Activated naive CD4-positive, alpha-beta T cell treated with anti-CD3 and anti-CD28 coated beads for 36 hours (primary cell): ENCODE measurements at regions of chr1 and their contacts with region 1.

Region 1: DNA sequence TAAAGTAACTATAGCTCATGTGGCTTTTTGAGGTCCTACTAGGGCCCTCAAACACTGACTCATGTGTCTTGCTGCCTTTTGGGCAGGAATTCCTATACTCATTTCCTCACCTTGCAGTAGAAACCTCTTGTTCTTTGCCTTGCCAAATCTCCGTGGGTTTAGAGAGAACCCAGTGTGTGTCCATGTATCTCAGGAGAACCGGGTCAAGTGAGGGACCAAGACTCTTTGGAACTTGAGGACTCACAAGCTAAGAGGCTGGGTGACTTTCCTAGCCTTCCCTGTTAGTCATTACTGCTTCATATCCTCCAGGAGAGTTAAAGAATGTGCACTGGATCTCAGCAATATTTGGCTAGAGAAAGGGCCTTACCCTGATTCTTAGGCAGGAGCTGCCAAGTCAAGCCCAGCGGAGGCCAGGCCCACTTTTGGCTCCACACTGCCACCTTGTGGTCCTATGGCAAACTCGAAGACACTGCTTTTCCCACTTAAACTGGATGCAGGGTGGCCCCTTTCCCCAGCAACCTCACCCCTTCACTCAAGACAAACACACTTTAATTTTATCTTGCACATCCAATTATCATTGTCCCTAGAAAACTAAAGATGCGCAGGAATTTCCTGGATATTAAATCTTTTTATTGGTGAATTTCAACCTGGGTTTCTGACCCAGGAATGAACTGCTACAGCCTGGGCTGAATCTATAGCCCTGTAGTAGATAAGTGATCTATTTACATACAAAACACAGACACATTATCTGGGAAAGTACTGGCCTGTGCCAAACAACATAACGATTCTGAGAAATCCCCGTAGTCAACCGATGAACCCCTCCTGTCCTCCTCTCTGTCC is 10.6 kb downstream of the AVPR1B start:
- DNase-seq: peak; percentile 92
- H3K4me3 Mint-ChIP-seq: no peak overlapping the region
- H3K27ac Mint-ChIP-seq: no peak overlapping the region
- H3K4me1 Mint-ChIP-seq: no peaks in the 10 kb centered on the region
- H3K27me3 Mint-ChIP-seq: peaks cover 2% of the 10 kb centered on the region

Region 2: DNA sequence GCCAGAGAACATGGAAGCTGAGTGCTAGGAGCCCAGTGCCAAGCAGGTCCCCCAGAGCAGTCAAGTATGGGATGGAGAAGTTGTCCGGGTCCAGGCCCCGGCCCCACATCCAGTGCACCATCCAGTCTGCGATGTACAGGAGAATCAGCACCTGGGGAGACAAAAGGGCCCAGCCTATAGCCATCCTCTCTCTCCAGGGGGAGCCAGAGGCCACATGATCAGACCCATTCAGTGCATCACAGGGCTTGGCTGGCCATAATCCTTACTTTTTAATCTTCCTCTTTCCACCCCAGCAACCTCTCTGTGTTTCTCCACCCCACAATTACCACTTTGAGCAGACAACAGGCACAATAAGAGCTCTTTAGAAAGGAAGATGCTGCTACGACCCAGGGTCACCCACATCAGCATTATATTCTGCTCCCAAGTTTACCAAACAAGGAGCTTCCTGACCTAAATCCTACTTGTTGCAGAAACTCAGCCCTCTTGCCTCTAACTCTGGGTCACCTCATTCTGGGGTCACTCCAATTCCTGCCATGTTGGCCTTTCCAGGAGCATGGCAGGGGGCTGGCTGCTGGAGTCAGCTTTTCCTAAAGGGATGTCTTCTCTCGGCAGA is 314.9 kb before region 1 on chr1:
- CTCF ChIA-PET with region 1: no interaction called
- intact Hi-C with region 1: loop called (anchors 1 kb)
- DNase-seq: peak; percentile 80
- H3K4me3 Mint-ChIP-seq: no peak overlapping the region
- H3K27ac Mint-ChIP-seq: no peak overlapping the region
- H3K4me1 Mint-ChIP-seq: no peaks in the 10 kb centered on the region
- H3K27me3 Mint-ChIP-seq: no peaks in the 10 kb centered on the region

Region 3: GRCh38 chr1:205983925-205984725 is 122.4 kb before region 1 on chr1:
- CTCF ChIA-PET with region 1: interaction called, 51 read pairs
- intact Hi-C with region 1: loop called (anchors 1 kb)
- DNase-seq: peak; percentile 63
- H3K4me3 Mint-ChIP-seq: no peak overlapping the region
- H3K27ac Mint-ChIP-seq: no peak overlapping the region
- H3K4me1 Mint-ChIP-seq: no peaks in the 10 kb centered on the region
- H3K27me3 Mint-ChIP-seq: no peaks in the 10 kb centered on the region

Region 4: DNA sequence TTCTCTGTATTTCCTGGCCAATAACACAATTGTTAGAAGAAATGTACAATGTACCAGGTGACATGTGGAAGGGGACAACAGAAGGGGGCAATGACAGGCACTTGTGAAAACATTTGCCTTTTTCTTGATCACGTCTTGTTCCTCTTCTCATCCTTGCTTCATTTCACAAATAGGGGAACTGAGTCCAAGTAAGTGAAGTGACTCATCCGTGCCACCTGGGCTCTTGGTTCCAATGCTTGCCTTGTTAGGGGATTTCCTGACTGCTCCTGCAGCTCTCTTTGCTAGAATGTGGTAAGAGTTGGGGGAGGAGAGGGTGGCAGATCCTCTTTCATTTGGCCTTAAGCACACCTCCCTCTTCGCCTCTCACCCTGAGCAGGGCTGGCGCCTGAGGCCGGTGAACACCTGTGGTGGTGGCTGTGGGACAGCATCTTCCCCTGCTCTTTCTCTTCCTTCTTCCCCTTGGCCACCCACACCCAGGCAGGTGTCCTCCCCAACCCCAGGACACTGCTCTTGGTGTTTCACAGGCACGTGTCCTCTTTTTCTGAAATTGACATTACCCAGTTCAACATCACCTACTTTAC is 55.8 kb before region 1 on chr1:
- CTCF ChIA-PET with region 1: interaction called, 17 read pairs
- intact Hi-C with region 1: no loop called
- DNase-seq: peak; percentile 87
- H3K4me3 Mint-ChIP-seq: no peak overlapping the region
- H3K27ac Mint-ChIP-seq: peak overlapping the region; percentile 60
- H3K4me1 Mint-ChIP-seq: peaks cover 47% of the 10 kb centered on the region
- H3K27me3 Mint-ChIP-seq: peaks cover 11% of the 10 kb centered on the region

Region 5: DNA sequence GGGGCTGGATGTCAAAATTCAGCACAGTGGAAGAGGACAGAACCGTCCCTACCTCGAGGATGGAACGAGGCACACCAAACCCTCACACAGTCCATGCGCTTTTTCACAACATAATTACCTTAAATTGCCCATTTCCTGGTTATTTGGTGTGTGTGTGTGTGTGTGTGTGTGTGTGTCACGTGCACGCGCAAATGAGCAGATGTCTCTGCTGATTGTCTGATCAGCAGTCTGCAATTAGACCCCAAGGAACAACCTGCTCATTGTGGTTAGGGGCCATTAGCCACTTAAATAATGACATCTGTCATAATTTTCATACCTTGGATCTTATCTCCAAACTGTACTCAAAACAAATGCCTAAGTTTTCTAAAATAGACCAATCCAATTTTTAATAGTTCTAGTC is 12.5 kb before region 1 on chr1:
- CTCF ChIA-PET with region 1: interaction called, 10 read pairs
- intact Hi-C with region 1: no loop called
- DNase-seq: no peak
- H3K4me3 Mint-ChIP-seq: no peak overlapping the region
- H3K27ac Mint-ChIP-seq: no peak overlapping the region
- H3K4me1 Mint-ChIP-seq: no peaks in the 10 kb centered on the region
- H3K27me3 Mint-ChIP-seq: peaks cover 5% of the 10 kb centered on the region

Region 6: DNA sequence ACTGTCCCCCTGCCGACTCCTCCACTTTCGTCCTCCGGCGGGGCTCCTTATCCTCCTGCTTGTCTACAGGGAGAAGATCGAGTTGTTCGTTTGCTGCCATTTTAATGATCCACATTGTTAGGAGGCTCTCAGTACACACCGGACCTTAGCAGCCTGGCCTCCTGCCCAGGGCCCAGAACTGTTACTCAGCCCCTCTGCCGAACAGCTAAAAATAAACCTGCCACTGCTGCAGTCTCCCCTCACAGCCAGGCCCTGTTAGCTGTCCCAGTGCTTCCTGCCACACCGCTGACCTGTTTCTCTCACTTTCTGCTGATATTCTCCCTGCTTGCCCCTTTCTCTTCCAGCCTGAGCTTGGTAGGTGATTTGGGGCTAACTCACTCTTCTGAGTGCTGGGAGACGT is 586.5 kb after region 1 on chr1:
- CTCF ChIA-PET with region 1: no interaction called
- intact Hi-C with region 1: no loop called
- DNase-seq: no peak
- H3K4me3 Mint-ChIP-seq: no peak overlapping the region
- H3K27ac Mint-ChIP-seq: no peak overlapping the region
- H3K4me1 Mint-ChIP-seq: peaks cover 57% of the 10 kb centered on the region
- H3K27me3 Mint-ChIP-seq: no peaks in the 10 kb centered on the region